Activated CD8-positive, alpha-beta T cell treated with anti-CD3 and anti-CD28 coated beads, Interleukin-2, amount 10 ng/mL, durations not matched to agents 7 days and 5 days (primary cell): ENCODE measurements at regions of chr2 and their contacts with region 1.

Region 1: DNA sequence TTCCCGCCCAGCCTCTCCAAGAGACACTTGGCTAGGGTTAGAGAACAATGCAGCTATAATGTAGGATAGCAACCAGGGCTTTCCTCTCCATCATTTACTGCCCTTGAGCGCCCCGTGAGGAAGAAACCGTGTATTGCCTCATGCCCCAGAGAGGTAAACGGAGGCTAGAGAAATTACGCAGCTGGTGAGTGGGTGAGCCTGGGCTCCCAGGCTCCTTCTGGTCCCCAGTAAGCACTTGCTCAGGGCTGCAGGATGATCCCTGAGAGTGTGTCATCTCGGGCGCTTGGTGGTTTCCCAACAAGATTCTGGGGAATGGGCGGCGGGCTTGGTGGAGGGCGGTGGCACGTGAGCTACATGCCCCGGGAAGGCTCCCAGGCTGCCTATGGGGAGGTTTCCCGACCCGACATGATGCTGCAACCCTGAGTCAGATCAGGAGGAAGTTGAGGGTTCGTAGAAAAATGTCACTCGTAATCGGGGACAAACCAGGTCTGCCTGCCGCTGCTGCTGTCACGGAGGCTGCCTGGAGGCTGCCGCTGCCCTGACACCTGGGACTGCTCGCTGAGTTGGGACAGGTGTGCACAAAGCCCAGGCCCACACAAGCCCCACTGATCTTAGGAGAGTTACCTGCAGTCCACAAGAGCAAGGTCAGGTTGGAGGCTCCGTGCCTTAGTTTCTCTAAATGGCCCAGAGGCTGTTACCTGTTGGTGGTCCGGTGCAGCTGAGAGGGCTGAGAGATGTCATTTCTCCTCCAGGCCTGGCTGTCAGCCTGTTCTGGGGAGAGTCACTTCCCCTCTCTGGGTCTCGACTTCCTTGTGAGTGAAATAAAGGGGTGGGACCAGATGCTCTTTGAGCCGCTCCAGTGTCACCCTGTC is at the start of gene GPR55:
- DNase-seq: peak; percentile 65
- ATAC-seq: peak; percentile 71
- H3K4me3 Mint-ChIP-seq: peak within 1 kb of the TSS; percentile 88
- H3K27ac Mint-ChIP-seq: peak within 1 kb of the TSS; percentile 94
- H3K4me1 Mint-ChIP-seq: peaks cover 81% of the 10 kb centered on the region
- H3K27me3 Mint-ChIP-seq: no peaks in the 10 kb centered on the region
- total RNA-seq, gene GPR55: 12.3 to 12.5 TPM

Region 2: DNA sequence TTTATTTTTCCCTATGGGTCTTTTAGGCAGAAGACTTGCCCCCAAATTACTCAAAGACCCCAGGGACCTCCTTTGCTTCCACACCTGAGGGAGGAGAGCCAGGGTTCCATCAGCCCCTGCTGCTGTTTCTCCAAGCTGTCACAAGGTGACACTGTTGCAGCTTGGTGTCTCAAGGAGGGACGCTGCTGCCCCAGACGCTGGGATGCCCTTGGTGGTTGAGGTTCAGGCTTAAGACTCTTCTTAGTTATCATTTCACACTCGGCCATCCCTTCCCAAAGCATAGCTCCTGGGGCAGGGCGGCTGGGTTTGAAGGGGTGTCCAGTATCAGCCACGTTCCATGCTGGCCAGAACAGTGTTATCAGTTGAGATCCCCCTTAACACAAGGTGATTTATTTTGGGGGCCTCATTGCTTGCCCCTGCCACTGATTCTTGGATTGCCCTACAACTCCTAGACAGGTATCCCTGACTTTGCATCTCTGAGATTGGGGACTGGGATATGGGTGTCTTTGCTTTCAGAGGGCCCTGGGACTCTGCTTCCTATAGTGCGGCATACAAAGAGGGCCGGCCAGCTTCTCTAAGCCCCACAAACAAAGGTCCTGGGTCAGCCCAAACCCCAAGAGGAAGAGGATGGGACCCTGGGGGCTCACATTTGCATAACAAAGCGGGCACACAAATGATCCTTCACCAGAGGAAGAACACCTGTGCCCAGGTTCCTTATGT is 22.4 kb before region 1 on chr2:
- CTCF ChIA-PET with region 1: interaction called, 33 read pairs
- POLR2A ChIA-PET with region 1: interaction called, 11 read pairs
- DNase-seq: peak; percentile 75
- ATAC-seq: peak; percentile 52
- H3K4me3 Mint-ChIP-seq: no peak overlapping the region
- H3K27ac Mint-ChIP-seq: no peak overlapping the region
- H3K4me1 Mint-ChIP-seq: peaks cover 37% of the 10 kb centered on the region
- H3K27me3 Mint-ChIP-seq: no peaks in the 10 kb centered on the region

Region 3: GRCh38 chr2:230913406-230914143 is 11.1 kb before region 1 on chr2:
- CTCF ChIA-PET with region 1: interaction called, 12 read pairs
- POLR2A ChIA-PET with region 1: interaction called, 3 read pairs
- DNase-seq: no peak
- ATAC-seq: no peak
- H3K4me3 Mint-ChIP-seq: no peak overlapping the region
- H3K27ac Mint-ChIP-seq: no peak overlapping the region
- H3K4me1 Mint-ChIP-seq: peaks cover 47% of the 10 kb centered on the region
- H3K27me3 Mint-ChIP-seq: no peaks in the 10 kb centered on the region

Region 4: GRCh38 chr2:230947908-230948365 is 23.2 kb after region 1 on chr2:
- CTCF ChIA-PET with region 1: interaction called, 22 read pairs
- POLR2A ChIA-PET with region 1: interaction called, 3 read pairs
- DNase-seq: peak; percentile 40
- ATAC-seq: no peak
- H3K4me3 Mint-ChIP-seq: no peak overlapping the region
- H3K27ac Mint-ChIP-seq: peak overlapping the region; percentile 72
- H3K4me1 Mint-ChIP-seq: peaks cover 65% of the 10 kb centered on the region
- H3K27me3 Mint-ChIP-seq: no peaks in the 10 kb centered on the region

Region 5: GRCh38 chr2:230974096-230974913 is 49.6 kb after region 1 on chr2:
- CTCF ChIA-PET with region 1: interaction called, 9 read pairs
- POLR2A ChIA-PET with region 1: interaction called, 10 read pairs
- DNase-seq: peak; percentile 82
- ATAC-seq: peak; percentile 95
- H3K4me3 Mint-ChIP-seq: peak overlapping the region; percentile 51
- H3K27ac Mint-ChIP-seq: peak overlapping the region; percentile 88
- H3K4me1 Mint-ChIP-seq: peaks cover 74% of the 10 kb centered on the region
- H3K27me3 Mint-ChIP-seq: no peaks in the 10 kb centered on the region